ENCODE measurements at regions of chr2 and their contacts with region 1.

Region 1: GRCh38 chr2:233668605-233669260 is 3.0 kb upstream of the UGT1A9 start:
- DNase-seq: no peak
- H3K4me3 ChIP-seq: no peak overlapping the region
- H3K27ac ChIP-seq: no peak overlapping the region
- H3K4me1 ChIP-seq: no peaks in the 10 kb centered on the region
- H3K27me3 ChIP-seq: no peaks in the 10 kb centered on the region
- CTCF ChIP-seq: no peak

Region 2: DNA sequence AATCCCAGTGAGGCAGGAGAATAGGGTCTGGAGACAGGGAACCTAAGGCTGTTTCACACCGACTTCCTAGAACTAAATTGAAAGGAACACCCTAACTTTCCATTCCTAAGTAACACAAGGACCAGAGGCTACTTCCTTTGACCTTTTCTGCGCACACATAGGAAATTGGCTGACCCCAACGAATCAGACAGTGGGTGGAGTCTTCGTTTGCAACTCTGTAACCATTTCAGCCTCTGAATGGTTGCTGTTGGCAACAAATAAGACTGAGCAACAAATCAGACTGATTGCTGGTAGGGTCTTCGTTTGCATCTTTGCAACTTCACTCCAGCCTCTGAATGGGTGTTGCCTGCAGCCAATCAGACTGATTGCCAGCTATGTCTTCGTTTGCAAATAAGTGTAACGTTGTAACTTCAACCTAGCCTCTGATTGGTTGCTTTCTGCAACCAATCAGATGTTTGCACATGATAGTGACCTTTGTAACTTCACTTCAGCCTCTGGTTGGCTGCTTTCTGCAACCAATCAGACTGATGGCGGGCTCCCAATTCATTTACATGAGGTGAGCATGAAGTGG is 136.8 kb before region 1 on chr2:
- CTCF ChIA-PET with region 1: no interaction called
- dilution Hi-C with region 1: no loop called
- in situ Hi-C with region 1: no loop called
- intact Hi-C with region 1: no loop called
- DNase-seq: no peak
- H3K4me3 ChIP-seq: no peak overlapping the region
- H3K27ac ChIP-seq: no peak overlapping the region
- H3K4me1 ChIP-seq: no peaks in the 10 kb centered on the region
- H3K27me3 ChIP-seq: no peaks in the 10 kb centered on the region
- CTCF ChIP-seq: no peak

Region 3: GRCh38 chr2:233593201-233593600 is 75.5 kb before region 1 on chr2:
- CTCF ChIA-PET with region 1: no interaction called
- dilution Hi-C with region 1: loop called (anchors 10 kb)
- in situ Hi-C with region 1: no loop called
- intact Hi-C with region 1: no loop called
- DNase-seq: peak; percentile 83
- H3K4me3 ChIP-seq: no peak overlapping the region
- H3K27ac ChIP-seq: no peak overlapping the region
- H3K4me1 ChIP-seq: peaks cover 3% of the 10 kb centered on the region
- H3K27me3 ChIP-seq: no peaks in the 10 kb centered on the region
- CTCF ChIP-seq: no peak

Region 4: DNA sequence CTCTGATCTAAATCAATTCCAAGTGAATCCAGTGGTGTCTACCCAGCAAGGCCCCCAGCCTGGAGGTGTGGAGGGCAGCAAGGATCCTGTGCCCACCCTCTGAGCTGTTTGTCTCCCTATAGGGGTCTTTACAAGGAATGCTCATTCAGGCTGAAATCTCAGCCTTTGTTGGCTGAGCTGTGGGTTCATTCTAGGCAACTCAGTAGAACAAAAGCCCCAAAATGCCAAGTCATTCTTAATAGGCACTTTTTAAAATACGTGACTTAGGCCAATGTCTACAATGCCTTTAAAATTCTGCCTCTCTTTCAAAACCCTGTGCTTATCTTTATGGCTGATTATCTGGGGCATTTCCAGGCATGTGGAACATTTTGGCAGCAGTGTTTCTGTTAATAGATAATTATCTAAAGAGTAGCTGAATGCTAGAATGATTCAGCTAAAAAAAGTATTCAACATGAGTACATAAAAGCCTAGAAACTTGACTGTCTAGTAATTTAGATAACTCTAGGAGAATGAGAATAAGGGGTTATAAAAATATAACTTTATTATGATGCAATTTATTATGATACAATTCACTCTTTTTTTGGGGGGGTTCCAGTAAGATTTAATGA is 31.4 kb after region 1 on chr2:
- CTCF ChIA-PET with region 1: no interaction called
- dilution Hi-C with region 1: no loop called
- in situ Hi-C with region 1: no loop called
- intact Hi-C with region 1: no loop called
- DNase-seq: peak; percentile 10
- H3K4me3 ChIP-seq: no peak overlapping the region
- H3K27ac ChIP-seq: no peak overlapping the region
- H3K4me1 ChIP-seq: no peaks in the 10 kb centered on the region
- H3K27me3 ChIP-seq: no peaks in the 10 kb centered on the region
- CTCF ChIP-seq: no peak